ENCODE measurements at regions of chr10 and their contacts with region 1.

Region 1: DNA sequence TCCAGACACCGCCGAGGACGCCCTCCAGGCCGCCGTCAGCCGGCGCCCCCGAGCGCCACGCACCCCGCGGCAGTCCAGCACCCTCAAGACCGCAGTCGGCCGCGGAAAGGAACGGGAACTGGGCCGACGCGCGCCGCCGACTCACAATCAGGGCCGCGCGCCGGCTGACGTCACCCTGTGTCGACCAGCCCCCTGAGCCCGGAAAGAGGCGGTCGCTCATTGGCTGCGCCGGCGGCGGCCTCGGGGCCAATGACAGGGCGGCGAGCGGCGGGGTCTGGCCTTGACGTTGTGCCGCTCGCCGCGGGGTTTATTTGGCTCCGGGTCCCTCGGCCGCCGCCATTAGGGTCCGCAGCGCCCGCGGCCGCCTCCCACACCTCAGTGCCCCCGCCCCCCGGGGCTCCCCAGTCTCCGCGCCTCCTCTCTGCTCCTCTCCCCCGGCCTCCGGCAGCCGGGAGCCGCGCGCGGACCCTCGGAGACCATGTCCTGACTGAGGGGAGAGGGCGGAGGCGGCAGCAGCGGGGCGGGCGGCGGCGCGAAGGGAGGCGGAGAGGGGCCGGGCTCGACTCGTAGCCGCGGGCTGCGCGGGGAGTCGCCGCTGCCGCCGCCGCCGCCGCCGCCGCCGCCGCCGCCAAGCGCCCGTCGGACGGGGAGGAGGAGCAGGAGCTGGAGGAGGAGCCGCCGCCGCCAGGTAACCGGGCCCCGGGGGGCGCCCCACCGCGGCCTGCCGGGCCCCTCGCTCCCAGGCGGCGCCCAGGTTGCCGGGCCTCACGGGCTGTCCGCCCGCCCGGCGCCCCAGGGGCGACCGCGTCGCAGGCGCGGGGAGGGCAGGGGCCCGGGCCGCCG is 25.1 kb upstream of the ZRANB1 start:
- DNase-seq: peak; percentile 91 to 99 (median 98)

Region 2: DNA sequence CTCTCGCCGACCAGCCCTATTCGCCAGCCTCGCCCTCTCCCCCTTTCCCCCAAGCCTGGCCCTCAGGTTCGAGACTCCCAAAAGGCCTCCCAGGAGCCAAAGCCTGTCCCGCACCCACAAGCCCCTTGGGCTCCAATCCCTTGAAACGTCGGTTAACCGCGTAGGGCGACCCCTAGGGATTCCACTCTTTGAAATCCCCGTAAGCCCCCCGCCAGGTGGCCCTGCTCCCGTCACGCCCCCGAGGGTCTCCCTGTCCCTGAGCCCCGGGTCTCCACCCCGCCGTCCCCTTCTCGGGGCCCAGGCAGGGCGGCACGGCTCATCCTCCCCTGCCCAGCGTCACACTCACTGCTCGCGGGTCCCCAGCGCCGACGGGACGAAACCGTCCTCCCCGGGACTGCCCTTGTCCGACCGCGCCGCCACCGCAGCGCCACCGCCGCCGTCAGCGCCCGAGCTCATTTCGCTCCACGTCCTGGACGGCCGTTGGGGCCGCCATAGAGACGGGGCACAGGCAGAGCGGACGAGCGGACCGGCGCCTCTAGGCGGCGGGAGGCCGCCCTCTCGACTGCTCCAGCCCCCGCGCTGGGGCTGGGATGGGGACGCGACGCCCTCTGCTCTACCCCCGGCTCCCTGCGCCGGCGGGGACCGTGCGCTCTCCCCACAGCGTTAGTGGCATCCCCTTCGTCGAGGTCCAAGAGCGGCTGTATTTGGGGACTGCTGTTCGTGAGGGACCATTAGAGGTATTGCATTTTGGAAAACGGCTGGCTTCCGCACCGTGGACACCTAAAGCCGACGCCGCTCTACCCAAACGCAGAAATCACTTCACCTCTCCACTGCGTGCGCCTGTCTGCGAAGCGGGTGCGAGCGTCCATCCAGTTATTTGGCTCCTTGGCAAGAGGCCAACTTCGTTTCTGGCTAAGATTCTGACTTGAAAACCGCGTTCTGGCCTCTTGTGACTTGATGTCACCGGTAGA is 125.1 kb before region 1 on chr10 and contains the start of gene EEF1AKMT2:
- intact Hi-C with region 1: loop called (anchors 10 kb)
- DNase-seq: peak; percentile 44 to 92 (median 84)

Region 3: DNA sequence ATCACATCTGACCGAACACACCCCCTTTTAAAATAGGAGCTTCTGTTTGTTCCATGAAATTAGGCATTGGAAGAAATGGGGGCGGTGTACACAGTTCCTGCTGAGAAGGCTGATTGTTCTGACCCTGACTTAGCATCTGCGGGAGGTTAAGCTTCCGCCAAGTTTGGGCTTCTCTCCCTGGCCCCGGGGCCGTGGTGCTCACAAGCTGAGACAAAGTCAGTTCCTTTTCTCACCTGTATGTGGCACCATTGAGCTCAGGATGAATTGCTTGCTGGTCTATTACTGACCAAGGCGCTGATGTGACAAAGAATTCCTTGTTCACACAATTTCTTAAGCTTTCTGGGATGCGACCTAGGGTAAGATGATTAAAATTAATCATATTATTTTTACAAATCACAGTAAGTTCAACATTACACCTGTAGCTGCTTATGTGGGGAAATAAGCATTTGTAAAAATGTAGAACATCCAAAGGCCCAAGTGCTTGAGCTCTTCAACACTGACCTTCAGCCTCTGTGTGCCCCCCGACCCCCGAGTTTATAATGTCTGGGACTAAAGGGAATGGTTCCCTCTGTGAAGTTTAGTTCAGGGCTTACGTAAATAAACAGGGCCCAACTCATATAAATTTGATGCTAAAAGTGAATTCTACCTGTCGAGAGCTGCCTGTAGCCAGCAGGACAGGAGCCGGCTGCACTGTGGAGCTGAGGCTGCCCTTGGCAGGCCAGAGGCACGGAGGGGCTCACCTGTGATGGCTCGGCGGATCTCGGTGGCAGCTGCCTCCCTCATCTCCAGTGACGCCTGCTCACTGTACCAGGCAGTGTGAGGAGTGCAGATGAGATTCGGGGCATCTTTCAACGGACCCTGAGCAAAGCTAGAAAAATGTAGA is 75.9 kb after region 1 on chr10:
- intact Hi-C with region 1: loop called (anchors 10 kb)
- DNase-seq: peak in 40 of 42 donors; percentile 44 to 95 (median 80)

Region 4: DNA sequence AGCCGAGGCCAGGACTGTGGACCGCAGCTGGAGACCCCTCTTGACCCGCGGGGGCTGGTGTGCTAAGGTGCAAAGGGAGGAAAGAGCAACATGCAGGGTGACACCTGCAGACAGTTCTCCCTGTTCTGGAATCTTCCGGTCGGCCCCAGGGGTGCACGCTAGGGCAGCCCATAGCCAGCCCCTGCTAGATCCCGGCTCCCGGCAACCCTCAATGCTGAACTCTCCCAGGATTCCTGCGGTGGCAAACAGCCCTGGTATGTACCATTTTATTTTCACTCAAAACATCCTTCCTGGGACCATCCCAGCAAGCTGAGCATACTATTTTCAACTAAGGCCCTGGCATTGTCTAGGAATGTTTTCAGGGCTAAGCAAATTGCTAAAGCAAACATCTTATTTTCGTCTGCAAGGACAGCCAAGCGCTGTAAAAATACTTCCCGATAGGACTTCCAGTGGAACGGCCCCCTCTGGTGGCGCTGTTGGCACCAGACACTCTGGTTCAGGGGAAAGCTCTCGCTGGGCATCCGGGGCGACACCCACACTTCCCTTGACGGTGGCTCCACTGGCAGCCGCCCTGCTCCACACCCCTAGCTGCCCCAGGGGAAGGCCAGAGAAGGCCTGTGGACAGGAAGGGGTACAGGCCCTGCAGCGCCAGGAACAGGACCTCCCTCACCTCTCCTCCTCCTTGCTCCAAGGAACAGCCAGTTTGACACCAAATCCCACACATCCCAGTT is 144.2 kb after region 1 on chr10:
- intact Hi-C with region 1: loop called (anchors 5 kb)
- DNase-seq: peak; percentile 83 to 95 (median 90)

Measured in head of caudate nucleus (tissue), 42 donors.